ENCODE measurements at regions of chr20 and their contacts with region 1.

Region 1: GRCh38 chr20:4740774-4741431 is 19.2 kb downstream of the PRND start:
- DNase-seq: peak; percentile 58 to 90
- H3K4me3 ChIP-seq: no peak overlapping the region
- H3K27ac ChIP-seq: no peak overlapping the region
- H3K4me1 ChIP-seq: no peaks in the 10 kb centered on the region
- H3K27me3 ChIP-seq: no peaks in the 10 kb centered on the region
- CTCF ChIP-seq: peak; percentile 48 to 90 (median 63)
- EP300 ChIP-seq: no peak
- POLR2A ChIP-seq: no peak
- RAD21 ChIP-seq: peak; percentile 57 to 66

Region 2: DNA sequence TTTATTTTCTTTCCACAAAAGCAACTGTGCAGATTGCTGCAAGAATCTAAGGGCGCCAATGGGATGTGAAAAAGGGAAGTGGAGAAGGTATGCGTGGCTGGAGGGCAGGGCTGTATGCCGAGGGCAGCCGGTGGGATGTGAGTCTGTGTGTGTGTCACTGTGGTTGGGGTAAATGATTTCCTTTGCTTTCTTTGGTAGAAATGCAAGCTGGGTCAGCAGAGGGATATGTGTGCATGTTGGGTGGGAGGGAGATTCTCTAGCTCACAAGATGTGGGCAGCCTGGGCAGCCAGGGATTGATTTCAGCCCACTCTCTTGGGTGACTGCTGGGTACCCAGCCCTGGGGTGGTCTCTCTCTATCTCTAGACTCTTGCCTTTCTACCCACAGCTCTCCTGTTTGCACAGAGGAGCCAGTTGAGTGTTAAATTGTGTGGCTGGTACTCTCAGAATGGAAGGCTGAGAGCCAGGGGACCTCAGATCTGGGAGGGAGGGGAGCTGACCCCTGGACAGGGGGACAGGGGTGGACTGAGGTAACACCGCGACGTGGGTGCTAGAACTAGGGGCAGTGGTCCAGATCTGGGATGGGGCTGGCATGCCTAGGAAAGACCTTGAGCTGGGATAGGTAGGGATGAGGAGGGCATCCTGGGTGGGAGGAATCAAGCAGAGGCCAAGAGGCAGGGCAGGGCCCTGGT is 588.8 kb before region 1 on chr20:
- CTCF ChIA-PET with region 1: no interaction called
- POLR2A ChIA-PET with region 1: no interaction called
- DNase-seq: no peak
- H3K4me3 ChIP-seq: no peak overlapping the region
- H3K27ac ChIP-seq: no peak overlapping the region
- H3K4me1 ChIP-seq: peaks cover 0 to 7% (median 2%) of the 10 kb centered on the region in 4 experiments; a peak in 4 of 7 replicates
- H3K27me3 ChIP-seq: peaks cover 2 to 17% (median 14%) of the 10 kb centered on the region in 4 experiments
- CTCF ChIP-seq: no peak
- EP300 ChIP-seq: no peak
- POLR2A ChIP-seq: no peak
- RAD21 ChIP-seq: no peak

Region 3: GRCh38 chr20:4607287-4607713 is 133.6 kb before region 1 on chr20:
- CTCF ChIA-PET with region 1: interaction called, 13 read pairs
- POLR2A ChIA-PET with region 1: no interaction called
- DNase-seq: peak; percentile 15 to 69
- H3K4me3 ChIP-seq: no peak overlapping the region
- H3K27ac ChIP-seq: no peak overlapping the region
- H3K4me1 ChIP-seq: no peaks in the 10 kb centered on the region; a peak in 1 of 7 replicates
- H3K27me3 ChIP-seq: no peaks in the 10 kb centered on the region
- CTCF ChIP-seq: peak; percentile 22 to 84 (median 82)
- EP300 ChIP-seq: no peak
- POLR2A ChIP-seq: no peak
- RAD21 ChIP-seq: peak; percentile 97

Region 4: DNA sequence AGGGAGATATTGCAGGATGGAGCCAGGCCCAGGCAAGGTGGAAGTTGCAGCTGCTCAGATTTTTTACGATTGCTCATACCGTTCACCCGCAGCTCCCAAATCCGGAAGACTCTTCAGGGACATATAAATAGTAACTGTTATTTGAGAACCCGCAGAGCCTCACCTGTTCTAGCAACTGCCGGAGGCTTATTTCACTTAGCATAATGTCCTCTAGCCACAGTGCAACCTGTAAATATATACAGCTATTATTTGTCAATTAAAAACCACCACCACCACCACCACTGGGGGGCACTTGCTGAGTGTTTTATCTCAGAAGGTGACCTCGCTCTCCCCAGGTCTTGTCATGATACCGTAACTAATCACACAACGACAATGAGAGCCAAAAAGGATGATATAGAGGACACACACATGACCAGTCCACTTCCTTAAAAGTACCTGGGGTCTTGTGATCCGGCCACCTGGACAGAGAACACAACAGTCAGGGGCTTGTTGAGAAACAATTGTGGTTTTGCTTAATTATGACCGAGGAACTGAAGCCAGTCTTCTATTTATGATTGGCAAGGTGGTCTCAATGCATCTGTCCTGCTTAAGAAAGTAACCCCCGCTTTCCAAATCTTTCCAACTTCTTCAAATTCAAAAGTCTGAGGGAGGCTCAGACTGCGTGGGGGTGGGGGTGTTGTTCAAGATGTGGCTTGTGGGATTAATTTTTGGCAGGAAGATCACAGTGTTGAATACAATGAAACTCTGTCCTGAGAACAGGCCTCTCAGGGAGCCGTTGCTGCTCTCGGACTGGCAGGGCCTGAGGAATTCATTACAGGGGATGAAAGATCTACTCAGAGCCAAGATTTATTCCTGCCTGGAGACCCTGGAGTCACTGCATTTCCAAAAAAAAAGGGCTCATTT is 126.9 kb before region 1 on chr20:
- CTCF ChIA-PET with region 1: interaction called, 10 read pairs
- POLR2A ChIA-PET with region 1: no interaction called
- DNase-seq: peak in 1 of 2 experiments; percentile 68
- H3K4me3 ChIP-seq: no peak overlapping the region
- H3K27ac ChIP-seq: no peak overlapping the region
- H3K4me1 ChIP-seq: no peaks in the 10 kb centered on the region; a peak in 2 of 7 replicates
- H3K27me3 ChIP-seq: no peaks in the 10 kb centered on the region
- CTCF ChIP-seq: peak in 2 of 3 experiments; percentile 55 to 70; a peak in 3 of 4 replicates
- EP300 ChIP-seq: no peak
- POLR2A ChIP-seq: no peak
- RAD21 ChIP-seq: peak; percentile 79 to 88

Region 5: GRCh38 chr20:4726710-4727397 is 14.0 kb before region 1 on chr20:
- CTCF ChIA-PET with region 1: interaction called, 15 read pairs
- POLR2A ChIA-PET with region 1: no interaction called
- DNase-seq: no peak
- H3K4me3 ChIP-seq: no peak overlapping the region
- H3K27ac ChIP-seq: no peak overlapping the region
- H3K4me1 ChIP-seq: peaks cover 0 to 14% (median 6%) of the 10 kb centered on the region in 4 experiments; a peak in 6 of 7 replicates
- H3K27me3 ChIP-seq: no peaks in the 10 kb centered on the region
- CTCF ChIP-seq: no peak
- EP300 ChIP-seq: no peak
- POLR2A ChIP-seq: no peak
- RAD21 ChIP-seq: no peak

Region 6: GRCh38 chr20:4844751-4845465 is 104.0 kb after region 1 on chr20:
- CTCF ChIA-PET with region 1: no interaction called
- POLR2A ChIA-PET with region 1: no interaction called
- DNase-seq: no peak
- H3K4me3 ChIP-seq: no peak overlapping the region
- H3K27ac ChIP-seq: no peak overlapping the region
- H3K4me1 ChIP-seq: no peaks in the 10 kb centered on the region
- H3K27me3 ChIP-seq: no peaks in the 10 kb centered on the region
- CTCF ChIP-seq: no peak
- EP300 ChIP-seq: no peak
- POLR2A ChIP-seq: no peak
- RAD21 ChIP-seq: no peak

Region 7: GRCh38 chr20:4956200-4956810 is 215.4 kb after region 1 on chr20:
- CTCF ChIA-PET with region 1: interaction called, 11 read pairs
- POLR2A ChIA-PET with region 1: no interaction called
- DNase-seq: no peak
- H3K4me3 ChIP-seq: no peak overlapping the region
- H3K27ac ChIP-seq: no peak overlapping the region
- H3K4me1 ChIP-seq: no peaks in the 10 kb centered on the region
- H3K27me3 ChIP-seq: no peaks in the 10 kb centered on the region
- CTCF ChIP-seq: peak in 2 of 3 experiments; percentile 56 to 58; a peak in 2 of 4 replicates
- EP300 ChIP-seq: no peak
- POLR2A ChIP-seq: no peak
- RAD21 ChIP-seq: peak; percentile 75 to 79

Measured in H1 (cell line).